ENCODE measurements at regions of chr12 and their contacts with region 1.

Region 1: DNA sequence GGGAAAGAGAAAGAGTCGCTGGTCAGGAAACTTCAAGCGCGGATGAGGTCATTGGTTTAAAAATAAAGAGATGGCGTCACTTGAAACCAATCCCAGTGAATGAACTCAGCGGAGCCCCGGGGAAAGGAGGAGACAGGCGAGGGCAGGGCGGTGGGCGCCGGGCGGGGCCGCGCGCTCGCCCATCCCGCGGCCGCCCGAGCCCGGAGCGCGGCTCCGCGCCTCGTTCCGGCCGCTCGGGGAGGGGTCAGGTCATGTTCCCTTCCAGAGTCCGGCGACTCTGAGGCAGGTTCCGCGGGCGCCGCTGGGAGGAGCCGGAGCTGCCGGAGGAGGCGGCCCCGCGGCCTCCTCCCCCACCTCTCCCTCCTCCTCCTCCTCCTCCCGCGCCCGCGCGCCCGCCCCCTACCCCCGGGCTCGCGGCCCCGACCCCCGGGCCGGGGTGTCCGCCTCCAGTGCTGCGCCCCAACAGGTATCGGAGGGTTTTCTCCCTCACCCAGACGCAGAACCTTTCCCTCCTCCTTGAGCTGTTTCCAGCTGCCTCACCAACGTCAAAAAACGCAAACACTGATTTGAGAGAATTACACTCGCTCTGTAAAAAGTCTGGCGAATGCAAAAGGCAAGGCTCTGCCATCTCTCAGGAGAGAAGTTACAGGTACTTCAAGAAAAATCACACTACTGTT is at the start of gene DUSP16:
- DNase-seq: peak; percentile 97 to 99
- H3K4me3 ChIP-seq: peak within 1 kb of the TSS; percentile 78
- H3K4me3 Mint-ChIP-seq: peak within 1 kb of the TSS; percentile 79
- H3K27ac Mint-ChIP-seq: peak within 1 kb of the TSS; percentile 86
- H3K4me1 ChIP-seq: peaks cover 30% of the 10 kb centered on the region
- H3K4me1 Mint-ChIP-seq: peaks cover 27% of the 10 kb centered on the region
- H3K27me3 ChIP-seq: no peaks in the 10 kb centered on the region
- H3K27me3 Mint-ChIP-seq: no peaks in the 10 kb centered on the region
- CTCF ChIP-seq: peak; percentile 29 to 34
- total RNA-seq, gene DUSP16: 63.9 and 76.8 TPM in 2 replicates

Region 2: GRCh38 chr12:12384571-12385340 is 178.0 kb before region 1 on chr12:
- CTCF ChIA-PET with region 1: no interaction called
- POLR2A ChIA-PET with region 1: interaction called, 5 read pairs
- intact Hi-C with region 1: loop called (anchors 2 kb)
- DNase-seq: peak; percentile 50 to 84
- H3K4me3 ChIP-seq: no peak overlapping the region
- H3K4me3 Mint-ChIP-seq: peak overlapping the region; percentile 30
- H3K27ac Mint-ChIP-seq: peak overlapping the region; percentile 75
- H3K4me1 ChIP-seq: peaks cover 56% of the 10 kb centered on the region
- H3K4me1 Mint-ChIP-seq: peaks cover 59% of the 10 kb centered on the region
- H3K27me3 ChIP-seq: no peaks in the 10 kb centered on the region
- H3K27me3 Mint-ChIP-seq: no peaks in the 10 kb centered on the region
- CTCF ChIP-seq: no peak

Region 3: DNA sequence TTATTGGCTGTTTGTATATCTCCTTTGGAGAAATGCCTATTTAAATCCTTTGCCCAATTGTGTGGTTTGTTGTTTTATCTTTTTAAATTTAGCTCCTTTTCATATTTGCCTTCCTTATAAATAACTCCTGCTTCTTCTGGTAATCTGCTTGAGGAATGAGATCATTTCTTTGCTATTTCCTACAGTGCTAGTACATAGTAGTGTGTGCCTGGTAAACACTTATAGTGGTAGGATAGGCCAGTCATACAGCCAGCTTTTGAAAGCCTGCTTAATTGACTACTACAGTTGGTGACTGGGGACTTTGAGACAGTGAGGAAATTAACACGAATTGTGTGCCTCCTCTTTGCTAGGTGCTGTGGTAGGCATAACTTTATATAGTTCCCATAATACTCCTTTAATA is 137.1 kb before region 1 on chr12:
- CTCF ChIA-PET with region 1: no interaction called
- POLR2A ChIA-PET with region 1: no interaction called
- intact Hi-C with region 1: no loop called
- DNase-seq: no peak
- H3K4me3 ChIP-seq: no peak overlapping the region
- H3K4me3 Mint-ChIP-seq: no peak overlapping the region
- H3K27ac Mint-ChIP-seq: no peak overlapping the region
- H3K4me1 ChIP-seq: peaks cover 19% of the 10 kb centered on the region
- H3K4me1 Mint-ChIP-seq: peaks cover 34% of the 10 kb centered on the region
- H3K27me3 ChIP-seq: no peaks in the 10 kb centered on the region
- H3K27me3 Mint-ChIP-seq: no peaks in the 10 kb centered on the region
- CTCF ChIP-seq: no peak

Region 4: GRCh38 chr12:12486661-12487240 is 76.0 kb before region 1 on chr12:
- CTCF ChIA-PET with region 1: no interaction called
- POLR2A ChIA-PET with region 1: no interaction called
- intact Hi-C with region 1: loop called (anchors 1 kb)
- DNase-seq: no peak
- H3K4me3 ChIP-seq: no peak overlapping the region
- H3K4me3 Mint-ChIP-seq: no peak overlapping the region
- H3K27ac Mint-ChIP-seq: no peak overlapping the region
- H3K4me1 ChIP-seq: peaks cover 26% of the 10 kb centered on the region
- H3K4me1 Mint-ChIP-seq: no peaks in the 10 kb centered on the region
- H3K27me3 ChIP-seq: no peaks in the 10 kb centered on the region
- H3K27me3 Mint-ChIP-seq: no peaks in the 10 kb centered on the region
- CTCF ChIP-seq: no peak

Region 5: DNA sequence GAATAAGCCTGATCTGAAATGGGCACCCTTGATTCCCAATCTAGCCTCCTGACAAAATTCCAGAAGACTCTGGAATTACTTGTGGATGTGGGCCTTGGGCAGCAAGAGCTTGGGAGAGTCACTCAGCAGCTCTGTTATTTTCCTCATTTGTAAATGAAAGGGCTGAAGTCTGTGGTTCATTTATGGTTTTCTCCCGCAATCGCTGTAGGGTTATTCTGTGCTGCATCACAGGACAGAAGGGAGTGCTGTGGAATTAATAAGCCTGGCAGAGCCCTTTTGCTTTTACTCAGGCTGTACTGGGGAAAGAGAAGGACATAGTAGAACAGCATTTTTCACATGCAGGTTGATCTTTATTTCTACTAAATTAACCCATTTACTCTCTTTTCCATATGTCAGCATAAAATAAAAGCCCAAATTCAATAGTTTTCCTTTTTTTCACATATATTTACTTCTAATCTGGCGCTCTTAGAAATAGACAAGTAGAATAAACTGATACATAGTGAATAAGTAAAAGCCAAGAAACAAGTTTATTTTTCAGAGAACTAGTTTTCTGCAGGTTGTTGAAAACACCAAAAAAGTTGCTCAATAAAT is 49.2 kb before region 1 on chr12:
- CTCF ChIA-PET with region 1: no interaction called
- POLR2A ChIA-PET with region 1: no interaction called
- intact Hi-C with region 1: no loop called
- DNase-seq: no peak
- H3K4me3 ChIP-seq: no peak overlapping the region
- H3K4me3 Mint-ChIP-seq: no peak overlapping the region
- H3K27ac Mint-ChIP-seq: no peak overlapping the region
- H3K4me1 ChIP-seq: no peaks in the 10 kb centered on the region
- H3K4me1 Mint-ChIP-seq: peaks cover 9% of the 10 kb centered on the region
- H3K27me3 ChIP-seq: no peaks in the 10 kb centered on the region
- H3K27me3 Mint-ChIP-seq: no peaks in the 10 kb centered on the region
- CTCF ChIP-seq: no peak

Region 6: DNA sequence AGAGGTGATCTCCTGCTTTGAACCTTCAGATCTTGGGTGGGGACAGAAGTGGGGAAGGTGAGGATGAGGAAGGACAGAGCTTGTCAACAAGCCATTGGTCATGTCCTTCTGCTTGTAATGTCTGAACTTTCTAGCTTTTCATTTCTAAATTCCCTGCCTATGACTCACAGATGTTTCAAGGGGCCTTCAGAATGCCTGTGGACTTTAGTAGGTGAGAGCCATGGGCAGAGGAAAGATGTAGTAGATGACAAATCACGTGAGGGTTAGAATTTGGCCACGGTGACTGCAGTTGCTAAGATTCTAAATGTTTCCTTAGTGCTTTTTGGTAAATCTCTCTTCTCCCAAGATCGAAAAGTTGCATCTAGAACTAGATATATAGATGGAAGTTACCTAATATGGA is 30.2 kb after region 1 on chr12:
- CTCF ChIA-PET with region 1: no interaction called
- POLR2A ChIA-PET with region 1: no interaction called
- intact Hi-C with region 1: no loop called
- DNase-seq: peak; percentile 44
- H3K4me3 ChIP-seq: no peak overlapping the region
- H3K4me3 Mint-ChIP-seq: peak overlapping the region; percentile 0
- H3K27ac Mint-ChIP-seq: peak overlapping the region; percentile 19
- H3K4me1 ChIP-seq: peaks cover 17% of the 10 kb centered on the region
- H3K4me1 Mint-ChIP-seq: peaks cover 11% of the 10 kb centered on the region
- H3K27me3 ChIP-seq: no peaks in the 10 kb centered on the region
- H3K27me3 Mint-ChIP-seq: no peaks in the 10 kb centered on the region
- CTCF ChIP-seq: no peak

Region 7: GRCh38 chr12:12611512-12612306 is 49.0 kb after region 1 on chr12 and contains the start of gene CREBL2:
- CTCF ChIA-PET with region 1: interaction called, 5 read pairs
- POLR2A ChIA-PET with region 1: interaction called, 3 read pairs
- intact Hi-C with region 1: loop called (anchors 1 kb)
- DNase-seq: peak; percentile 96
- H3K4me3 ChIP-seq: peak within 1 kb of the TSS; percentile 66
- H3K4me3 Mint-ChIP-seq: peak within 1 kb of the TSS; percentile 89
- H3K27ac Mint-ChIP-seq: peak within 1 kb of the TSS; percentile 57
- H3K4me1 ChIP-seq: peaks cover 11% of the 10 kb centered on the region
- H3K4me1 Mint-ChIP-seq: peaks cover 24% of the 10 kb centered on the region
- H3K27me3 ChIP-seq: no peaks in the 10 kb centered on the region
- H3K27me3 Mint-ChIP-seq: no peaks in the 10 kb centered on the region
- CTCF ChIP-seq: no peak
- total RNA-seq, gene CREBL2: 25.0 and 26.3 TPM in 2 replicates

Region 8: GRCh38 chr12:12704593-12705230 is 142.0 kb after region 1 on chr12:
- CTCF ChIA-PET with region 1: no interaction called
- POLR2A ChIA-PET with region 1: no interaction called
- intact Hi-C with region 1: loop called (anchors 1 kb)
- DNase-seq: peak; percentile 83 to 86
- H3K4me3 ChIP-seq: no peak overlapping the region
- H3K4me3 Mint-ChIP-seq: no peak overlapping the region
- H3K27ac Mint-ChIP-seq: no peak overlapping the region
- H3K4me1 ChIP-seq: peaks cover 12% of the 10 kb centered on the region
- H3K4me1 Mint-ChIP-seq: peaks cover 15% of the 10 kb centered on the region
- H3K27me3 ChIP-seq: no peaks in the 10 kb centered on the region
- H3K27me3 Mint-ChIP-seq: no peaks in the 10 kb centered on the region
- CTCF ChIP-seq: peak; percentile 98